Activated CD4-positive, alpha-beta memory T cell treated with anti-CD3 and anti-CD28 coated beads, Interleukin-2, amount 10 ng/mL, durations not matched to agents 7 days and 5 days (primary cell): ENCODE measurements at regions of chr7 and their contacts with region 1.

Region 1: DNA sequence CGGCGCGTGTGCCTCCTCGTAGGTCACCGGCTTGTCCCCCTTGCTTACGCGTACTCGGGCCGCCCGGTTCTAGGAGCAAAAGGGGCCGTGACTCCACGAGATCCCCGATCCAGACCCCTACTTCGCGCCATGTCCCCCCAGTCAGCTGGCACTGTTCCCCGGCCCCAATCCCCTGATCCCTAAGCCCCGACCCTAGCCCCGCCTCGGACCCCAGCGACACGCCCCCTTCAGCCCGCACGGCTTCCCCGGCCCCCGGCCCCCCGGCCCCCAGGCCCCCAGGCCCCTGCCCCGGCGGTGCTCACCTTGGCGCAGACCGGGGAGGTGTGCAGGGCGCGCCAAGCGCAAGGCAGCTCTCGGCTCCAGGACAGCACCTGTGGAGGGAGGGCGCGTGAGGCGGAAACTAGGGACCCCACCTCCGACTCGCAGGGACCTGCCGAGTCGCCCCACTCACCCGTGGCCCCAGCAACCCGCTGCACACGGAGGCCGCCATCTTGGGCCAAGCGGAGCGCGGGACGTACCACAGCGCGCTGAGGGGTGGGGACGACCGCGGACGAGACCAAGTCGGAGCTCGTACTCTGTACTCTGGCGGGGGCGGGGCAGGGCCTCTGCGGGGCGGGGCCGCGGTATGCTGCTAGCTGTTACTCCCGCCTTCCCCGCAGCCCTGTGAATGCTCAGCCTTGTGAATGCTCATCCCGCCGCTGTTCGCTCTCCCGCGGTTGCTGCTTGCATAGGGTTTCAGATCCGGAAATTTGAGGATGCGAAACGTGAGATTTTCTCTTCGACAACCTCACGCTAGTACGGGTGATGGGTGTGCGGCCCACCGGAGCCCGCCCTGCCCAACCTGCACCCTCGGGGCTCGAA is at the start of gene MRPS24:
- DNase-seq: peak; percentile 95
- H3K4me3 Mint-ChIP-seq: peak within 1 kb of the TSS; percentile 76
- H3K27ac Mint-ChIP-seq: peak within 1 kb of the TSS; percentile 42
- H3K4me1 Mint-ChIP-seq: peaks cover 18% of the 10 kb centered on the region
- H3K27me3 Mint-ChIP-seq: peaks cover 5% of the 10 kb centered on the region
- total RNA-seq, gene MRPS24: 74.6 to 76.5 TPM

Region 2: DNA sequence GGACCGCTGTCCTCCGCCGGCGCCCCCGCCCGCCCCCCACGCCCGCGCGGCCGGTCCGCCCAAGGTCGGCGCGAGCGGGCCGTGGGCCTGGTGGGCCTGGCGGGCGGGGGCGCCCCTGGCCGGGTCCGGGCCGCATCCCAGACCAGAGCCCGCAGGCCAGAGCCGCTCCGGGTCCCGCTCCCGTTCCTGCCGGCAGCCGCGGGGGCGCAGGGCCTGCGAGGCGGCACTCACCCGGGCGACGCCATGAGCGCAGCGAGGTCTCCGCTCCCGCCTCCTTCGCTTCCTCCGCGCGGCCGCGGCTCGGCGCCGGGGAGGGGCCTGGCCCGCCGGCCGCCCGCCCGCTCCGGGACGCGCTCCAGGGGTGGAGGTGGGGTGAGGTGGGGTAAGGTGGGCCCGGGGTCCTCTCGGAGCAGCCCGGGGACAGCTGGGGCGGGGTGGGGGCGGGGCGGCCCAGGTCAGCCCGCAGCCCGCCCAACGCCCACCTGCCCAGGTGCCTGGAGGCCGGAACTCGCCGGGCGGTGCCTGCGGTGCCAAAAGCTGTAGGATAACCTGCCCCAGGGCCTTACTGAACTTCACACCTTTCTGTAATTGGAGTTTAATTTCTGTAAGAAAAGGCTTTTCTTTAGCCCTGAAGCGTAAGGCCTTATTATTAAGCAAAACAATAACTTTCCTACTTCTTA is 37.2 kb after region 1 on chr7 and contains the start of gene URGCP:
- CTCF ChIA-PET with region 1: no interaction called
- POLR2A ChIA-PET with region 1: interaction called, 14 read pairs
- DNase-seq: peak; percentile 60
- H3K4me3 Mint-ChIP-seq: peak within 1 kb of the TSS; percentile 88
- H3K27ac Mint-ChIP-seq: peak within 1 kb of the TSS; percentile 79
- H3K4me1 Mint-ChIP-seq: peaks cover 24% of the 10 kb centered on the region
- H3K27me3 Mint-ChIP-seq: no peaks in the 10 kb centered on the region
- total RNA-seq, gene URGCP: 19.8 to 20.1 TPM

Region 3: GRCh38 chr7:43925984-43926797 is 57.0 kb after region 1 on chr7 and contains the start of gene UBE2D4:
- CTCF ChIA-PET with region 1: no interaction called
- POLR2A ChIA-PET with region 1: interaction called, 10 read pairs
- DNase-seq: peak; percentile 89
- H3K4me3 Mint-ChIP-seq: peak within 1 kb of the TSS; percentile 84
- H3K27ac Mint-ChIP-seq: peak within 1 kb of the TSS; percentile 88
- H3K4me1 Mint-ChIP-seq: peaks cover 33% of the 10 kb centered on the region
- H3K27me3 Mint-ChIP-seq: no peaks in the 10 kb centered on the region
- total RNA-seq, gene UBE2D4: 5.3 to 6.8 TPM